HepG2 (cell line): ENCODE measurements at regions of chr4 and their contacts with region 1.

Region 1: GRCh38 chr4:107757864-107758476 is 37.9 kb upstream of the PAPSS1 start:
- DNase-seq: peak; percentile 28
- ATAC-seq: no peak
- H3K4me3 ChIP-seq: no peak overlapping the region
- H3K27ac ChIP-seq: no peak overlapping the region
- H3K4me1 ChIP-seq: peaks cover 17% of the 10 kb centered on the region
- H3K27me3 ChIP-seq: no peaks in the 10 kb centered on the region
- CTCF ChIP-seq: no peak
- EP300 ChIP-seq: no peak
- POLR2A ChIP-seq: no peak
- RAD21 ChIP-seq: no peak

Region 2: GRCh38 chr4:107913281-107913899 is 155.4 kb after region 1 on chr4:
- CTCF ChIA-PET with region 1: interaction called, 72 read pairs
- POLR2A ChIA-PET with region 1: no interaction called
- in situ Hi-C with region 1: loop called (anchors 5 kb)
- intact Hi-C with region 1: loop called (anchors 1 kb)
- DNase-seq: peak; percentile 59
- ATAC-seq: peak; percentile 82
- H3K4me3 ChIP-seq: no peak overlapping the region
- H3K27ac ChIP-seq: no peak overlapping the region
- H3K4me1 ChIP-seq: no peaks in the 10 kb centered on the region
- H3K27me3 ChIP-seq: no peaks in the 10 kb centered on the region
- CTCF ChIP-seq: peak; percentile 80
- EP300 ChIP-seq: no peak
- POLR2A ChIP-seq: no peak
- RAD21 ChIP-seq: peak; percentile 77